Spleen (tissue), 13 donors: ENCODE measurements at regions of chr17 and their contacts with region 1.

Region 1: DNA sequence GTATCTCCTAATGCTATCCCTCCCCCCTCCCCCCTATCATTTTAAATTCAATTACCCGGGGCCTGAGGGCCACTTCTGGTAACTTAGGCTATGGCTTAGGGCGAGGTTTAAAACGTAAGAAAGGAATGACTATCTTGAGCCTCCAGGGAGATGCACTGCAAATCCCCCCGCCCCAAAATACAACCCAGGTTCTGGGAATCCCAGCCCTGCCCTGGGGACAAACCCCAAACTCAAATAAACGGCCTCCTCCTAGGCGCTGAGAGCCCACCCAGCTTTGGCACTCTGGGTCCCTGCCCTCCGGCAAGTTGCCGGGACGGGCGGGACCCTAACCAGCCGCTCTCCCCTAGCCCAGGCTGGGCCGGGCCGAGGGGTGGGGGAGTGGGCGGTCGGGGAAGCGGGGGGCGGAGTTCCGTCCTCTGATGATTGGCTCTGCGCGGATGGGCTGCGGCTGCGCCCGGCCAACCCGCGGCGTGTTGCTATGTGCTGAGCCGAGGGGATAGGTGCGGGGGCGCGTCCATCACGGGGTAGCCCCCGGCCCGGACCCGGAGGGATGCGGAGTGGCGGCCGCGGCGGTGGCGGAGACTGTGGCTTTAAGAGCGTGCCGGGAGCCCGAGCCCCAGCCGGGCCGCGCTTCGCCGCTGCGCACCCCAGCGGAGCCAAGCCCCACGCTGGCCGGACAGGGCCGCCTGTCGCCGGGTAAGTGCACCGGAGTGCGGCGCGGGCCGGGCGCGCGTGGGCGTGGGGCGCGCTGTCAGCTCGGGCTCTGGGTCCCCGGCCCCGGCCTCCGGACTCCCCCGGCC is at the start of gene YPEL2:
- DNase-seq: peak; percentile 97
- H3K4me3 ChIP-seq: peak within 1 kb of the TSS; percentile 86 to 99 (median 96)
- H3K27ac ChIP-seq: peak within 1 kb of the TSS; percentile 67 to 95 (median 92)
- H3K4me1 ChIP-seq: peaks cover 28 to 81% (median 65%) of the 10 kb centered on the region in 6 donors
- H3K27me3 ChIP-seq: no peaks in the 10 kb centered on the region
- CTCF ChIP-seq: peak in 1 of 11 experiments; percentile 9
- POLR2A ChIP-seq: peak in 1 of 3 donors; percentile 56
- total RNA-seq, gene YPEL2: 24.6 to 45.6 (median 36.2) TPM

Region 2: DNA sequence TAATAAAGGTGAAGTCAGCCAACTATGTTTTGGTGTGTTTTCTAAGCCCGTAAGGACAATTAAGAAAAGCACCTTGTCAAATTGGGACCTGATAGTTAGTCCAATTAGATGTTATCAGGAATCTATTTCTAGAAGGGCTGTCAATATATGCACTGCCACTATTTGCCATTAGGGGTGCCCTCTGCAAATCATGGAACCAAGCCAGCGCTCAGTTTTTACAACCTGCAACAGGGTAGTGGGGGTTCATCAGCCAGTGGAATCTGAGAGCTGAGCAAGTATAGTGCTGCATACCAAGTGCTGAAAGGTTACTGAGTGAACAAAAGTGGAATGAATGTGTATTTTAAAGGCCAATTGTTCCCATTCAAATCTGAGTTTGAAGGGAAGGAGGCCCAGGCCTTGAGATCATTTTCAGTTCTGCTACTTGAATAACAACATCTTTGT is 165.4 kb before region 1 on chr17:
- intact Hi-C with region 1: no loop called
- DNase-seq: no peak
- H3K4me3 ChIP-seq: no peak overlapping the region
- H3K27ac ChIP-seq: peak overlapping the region in 4 of 8 donors; percentile 19 to 69 (median 38)
- H3K4me1 ChIP-seq: peaks cover 0 to 9% (median 2%) of the 10 kb centered on the region in 6 donors
- H3K27me3 ChIP-seq: no peaks in the 10 kb centered on the region
- CTCF ChIP-seq: peak in 8 of 11 experiments; percentile 12 to 66 (median 58)
- POLR2A ChIP-seq: no peak

Region 3: DNA sequence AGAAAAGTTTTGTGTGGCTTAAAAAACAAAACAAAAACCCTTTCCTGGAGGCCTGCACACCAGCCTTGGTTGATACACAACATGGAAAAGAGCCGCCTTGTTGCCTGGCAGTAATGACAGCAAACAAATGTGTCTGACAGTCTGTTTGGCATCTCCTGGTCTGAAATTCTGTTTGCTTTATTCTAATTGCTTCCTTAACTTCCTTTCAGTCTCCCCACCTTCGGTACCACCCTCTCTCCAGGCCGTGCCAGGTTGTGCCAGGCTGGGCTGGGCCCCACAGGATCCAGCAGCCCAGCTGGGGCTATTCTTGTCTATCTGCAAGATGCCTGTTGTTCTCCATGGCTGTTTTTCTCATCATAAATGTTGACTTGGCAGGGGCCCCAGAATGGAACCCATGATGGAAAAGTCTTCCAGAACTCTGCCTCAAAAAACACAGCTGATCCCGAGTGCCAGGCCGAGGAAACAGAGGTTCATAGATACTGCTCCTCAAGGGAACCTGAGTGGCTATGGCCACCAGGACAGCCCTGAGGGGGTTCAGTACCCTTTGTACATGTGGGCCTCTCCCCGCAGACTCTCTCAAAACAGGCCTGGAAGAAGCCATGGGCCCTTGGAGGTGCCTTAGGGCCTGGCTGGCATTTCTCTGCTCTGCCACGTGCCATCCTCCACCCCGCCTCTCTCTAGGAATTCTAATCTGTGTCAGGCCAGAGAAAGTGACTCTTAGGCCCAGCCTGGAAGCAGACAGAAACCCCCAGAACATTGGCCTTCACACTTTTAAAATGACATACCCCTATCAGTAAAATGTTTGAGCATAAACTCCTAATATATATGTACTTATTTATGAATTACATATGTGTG is 50.6 kb after region 1 on chr17:
- intact Hi-C with region 1: loop called (anchors 10 kb)
- DNase-seq: no peak
- H3K4me3 ChIP-seq: no peak overlapping the region
- H3K27ac ChIP-seq: peak overlapping the region in 6 of 8 donors; percentile 3 to 55 (median 22)
- H3K4me1 ChIP-seq: peaks cover 3 to 56% (median 17%) of the 10 kb centered on the region in 6 donors
- H3K27me3 ChIP-seq: no peaks in the 10 kb centered on the region
- CTCF ChIP-seq: no peak
- POLR2A ChIP-seq: no peak

Region 4: DNA sequence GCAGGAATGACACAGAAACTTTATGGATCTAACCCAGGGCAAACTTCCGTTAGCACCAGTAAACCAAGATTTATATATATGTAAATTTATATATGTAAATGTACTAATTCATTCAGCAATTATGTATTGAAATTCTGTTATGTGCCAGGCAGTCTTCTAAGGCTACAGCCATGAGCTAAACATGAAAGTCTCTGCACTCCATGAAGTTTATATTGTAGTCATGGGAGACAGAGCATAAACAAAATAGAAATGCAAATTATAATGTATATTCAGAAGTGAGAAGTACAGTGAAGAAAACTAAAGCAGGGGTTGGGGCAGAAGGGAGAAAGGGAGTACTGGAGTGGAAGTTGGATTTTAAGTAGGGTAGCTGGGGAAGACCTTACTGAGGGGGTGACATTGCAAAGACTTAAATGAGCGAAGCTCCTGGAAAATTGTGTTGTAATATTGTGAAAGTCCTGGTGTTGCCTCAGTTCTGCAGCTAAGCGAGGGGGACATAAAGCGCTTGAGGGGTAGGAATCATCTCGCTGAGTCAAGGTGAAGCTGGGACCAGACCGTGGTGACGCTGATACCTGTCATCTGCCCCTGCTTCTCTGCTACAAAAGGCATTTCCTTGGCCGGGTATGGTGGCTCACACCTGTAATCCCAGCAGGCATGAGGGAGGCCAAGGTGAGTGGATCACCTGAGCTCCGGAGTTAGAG is 65.0 kb after region 1 on chr17:
- intact Hi-C with region 1: no loop called
- DNase-seq: no peak
- H3K4me3 ChIP-seq: no peak overlapping the region
- H3K27ac ChIP-seq: no peak overlapping the region
- H3K4me1 ChIP-seq: peaks cover 0 to 28% (median 0%) of the 10 kb centered on the region in 6 donors
- H3K27me3 ChIP-seq: no peaks in the 10 kb centered on the region
- CTCF ChIP-seq: no peak
- POLR2A ChIP-seq: no peak

Region 5: GRCh38 chr17:59440784-59441441 is 109.6 kb after region 1 on chr17:
- intact Hi-C with region 1: loop called (anchors 5 kb)
- DNase-seq: peak; percentile 91
- H3K4me3 ChIP-seq: peak overlapping the region in 2 of 8 donors; percentile 15 to 43
- H3K27ac ChIP-seq: peak overlapping the region in 7 of 8 donors; percentile 40 to 76 (median 72)
- H3K4me1 ChIP-seq: peaks cover 18 to 73% (median 46%) of the 10 kb centered on the region in 6 donors
- H3K27me3 ChIP-seq: no peaks in the 10 kb centered on the region
- CTCF ChIP-seq: peak; percentile 80 to 95 (median 87)
- POLR2A ChIP-seq: no peak